Caco-2 (cell line): ENCODE measurements at regions of chr2 and their contacts with region 1.

Region 1: GRCh38 chr2:236963631-236964182 is 122.0 kb upstream of the COPS8 start:
- DNase-seq: no peak
- H3K4me3 ChIP-seq: no peak overlapping the region
- H3K4me3 Mint-ChIP-seq: no peak overlapping the region
- H3K27ac Mint-ChIP-seq: no peak overlapping the region
- H3K4me1 ChIP-seq: peaks cover 18% of the 10 kb centered on the region
- H3K4me1 Mint-ChIP-seq: peaks cover 6% of the 10 kb centered on the region
- H3K27me3 ChIP-seq: no peaks in the 10 kb centered on the region
- H3K27me3 Mint-ChIP-seq: no peaks in the 10 kb centered on the region
- CTCF ChIP-seq: no peak

Region 2: DNA sequence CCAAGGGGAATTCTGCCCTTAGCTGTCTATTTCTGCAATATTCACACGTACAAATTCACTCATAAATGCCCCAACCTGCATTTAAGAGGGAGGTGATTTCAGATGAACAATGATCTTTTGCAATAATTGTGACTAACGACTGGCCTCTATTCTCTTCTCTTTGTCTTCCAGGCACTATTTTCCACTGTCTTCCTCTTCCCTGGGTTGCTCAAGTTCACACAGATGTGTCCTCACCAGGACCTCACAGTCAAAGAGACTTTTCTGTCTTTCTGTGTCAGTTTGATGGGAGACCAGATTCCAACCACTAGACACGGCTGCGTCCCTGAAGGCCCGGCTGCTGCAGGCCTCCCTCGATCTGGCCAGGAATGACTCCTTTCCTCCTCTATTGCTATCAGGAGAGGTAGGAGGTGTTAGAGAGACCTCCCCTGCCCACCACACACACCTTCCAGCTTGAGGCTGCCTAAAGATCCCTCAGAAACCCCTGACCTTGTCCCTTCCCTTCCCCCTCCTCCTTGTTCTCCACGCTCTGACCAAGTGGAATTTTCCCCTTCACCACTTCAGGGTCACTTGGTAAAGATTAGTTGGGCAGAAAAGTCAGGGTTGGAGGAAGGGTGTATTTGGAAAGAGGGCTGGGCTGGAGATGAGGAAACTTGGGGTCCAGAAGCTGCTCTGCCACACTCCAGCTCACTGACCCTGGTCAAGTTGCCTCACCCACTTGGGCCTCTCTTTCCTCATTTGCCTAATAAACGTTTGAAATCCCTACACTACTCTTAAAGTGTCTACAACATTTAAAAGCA is 12.8 kb after region 1 on chr2:
- CTCF ChIA-PET with region 1: no interaction called
- POLR2A ChIA-PET with region 1: no interaction called
- intact Hi-C with region 1: loop called (anchors 2 kb)
- DNase-seq: no peak
- H3K4me3 ChIP-seq: no peak overlapping the region
- H3K4me3 Mint-ChIP-seq: no peak overlapping the region
- H3K27ac Mint-ChIP-seq: no peak overlapping the region
- H3K4me1 ChIP-seq: peaks cover 12% of the 10 kb centered on the region
- H3K4me1 Mint-ChIP-seq: peaks cover 8% of the 10 kb centered on the region
- H3K27me3 ChIP-seq: no peaks in the 10 kb centered on the region
- H3K27me3 Mint-ChIP-seq: no peaks in the 10 kb centered on the region
- CTCF ChIP-seq: no peak